ENCODE measurements at regions of chr3 and their contacts with region 1.

Region 1: GRCh38 chr3:172087602-172088580 is 48.5 kb downstream of the FNDC3B start:
- DNase-seq: peak; percentile 20
- H3K4me3 Mint-ChIP-seq: no peak overlapping the region
- H3K27ac Mint-ChIP-seq: peak overlapping the region; percentile 26
- H3K4me1 Mint-ChIP-seq: peaks cover 26% of the 10 kb centered on the region
- H3K27me3 Mint-ChIP-seq: no peaks in the 10 kb centered on the region

Region 2: GRCh38 chr3:172106989-172107388 is 19.1 kb after region 1 on chr3:
- CTCF ChIA-PET with region 1: interaction called, 10 read pairs
- POLR2A ChIA-PET with region 1: no interaction called
- DNase-seq: peak; percentile 82
- H3K4me3 Mint-ChIP-seq: peak overlapping the region; percentile 75
- H3K27ac Mint-ChIP-seq: peak overlapping the region; percentile 92
- H3K4me1 Mint-ChIP-seq: peaks cover 72% of the 10 kb centered on the region
- H3K27me3 Mint-ChIP-seq: no peaks in the 10 kb centered on the region

Region 3: GRCh38 chr3:172787746-172788145 is 699.9 kb after region 1 on chr3:
- CTCF ChIA-PET with region 1: no interaction called
- POLR2A ChIA-PET with region 1: no interaction called
- DNase-seq: no peak
- H3K4me3 Mint-ChIP-seq: no peak overlapping the region
- H3K27ac Mint-ChIP-seq: no peak overlapping the region
- H3K4me1 Mint-ChIP-seq: no peaks in the 10 kb centered on the region
- H3K27me3 Mint-ChIP-seq: no peaks in the 10 kb centered on the region

Measured in activated CD4-positive, alpha-beta T cell treated with anti-CD3 and anti-CD28 coated beads, Interleukin-2, amount 10 ng/mL, durations not matched to agents 7 days and 5 days (primary cell).